Calu3 (cell line): ENCODE measurements at regions of chr11 and their contacts with region 1.

Region 1: DNA sequence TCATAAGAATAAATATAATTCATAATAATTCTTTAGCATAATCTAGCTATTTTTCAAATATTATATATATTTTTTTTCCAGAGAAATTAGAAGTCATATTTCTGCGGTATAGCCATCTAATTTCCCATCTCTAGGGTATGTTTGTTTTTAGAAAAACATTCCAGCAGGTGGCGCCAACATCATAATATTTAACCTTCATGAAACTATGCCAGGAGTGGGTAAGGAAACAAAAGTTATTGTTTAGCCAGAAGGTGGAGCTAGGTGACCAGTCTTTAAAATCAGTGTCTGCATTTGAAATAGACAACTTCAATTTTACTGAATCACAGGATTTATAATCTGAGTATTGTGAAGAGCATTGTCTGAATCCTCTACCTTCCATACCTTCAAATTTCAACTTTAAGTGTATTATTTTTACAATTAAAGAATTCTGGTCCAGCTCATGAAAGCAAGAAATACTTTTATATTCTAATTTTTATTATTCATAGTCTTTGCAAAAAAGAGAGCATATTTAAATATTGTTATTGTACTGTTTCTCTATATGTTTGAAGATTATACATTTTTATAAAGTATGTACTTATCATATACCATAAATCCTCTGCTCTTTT is 15.7 kb upstream of the CCDC179 start:
- DNase-seq: peak; percentile 72
- H3K4me3 Mint-ChIP-seq: no peak overlapping the region
- H3K27ac Mint-ChIP-seq: no peak overlapping the region
- H3K4me1 Mint-ChIP-seq: no peaks in the 10 kb centered on the region
- H3K27me3 Mint-ChIP-seq: no peaks in the 10 kb centered on the region
- CTCF ChIP-seq: peak; percentile 74

Region 2: DNA sequence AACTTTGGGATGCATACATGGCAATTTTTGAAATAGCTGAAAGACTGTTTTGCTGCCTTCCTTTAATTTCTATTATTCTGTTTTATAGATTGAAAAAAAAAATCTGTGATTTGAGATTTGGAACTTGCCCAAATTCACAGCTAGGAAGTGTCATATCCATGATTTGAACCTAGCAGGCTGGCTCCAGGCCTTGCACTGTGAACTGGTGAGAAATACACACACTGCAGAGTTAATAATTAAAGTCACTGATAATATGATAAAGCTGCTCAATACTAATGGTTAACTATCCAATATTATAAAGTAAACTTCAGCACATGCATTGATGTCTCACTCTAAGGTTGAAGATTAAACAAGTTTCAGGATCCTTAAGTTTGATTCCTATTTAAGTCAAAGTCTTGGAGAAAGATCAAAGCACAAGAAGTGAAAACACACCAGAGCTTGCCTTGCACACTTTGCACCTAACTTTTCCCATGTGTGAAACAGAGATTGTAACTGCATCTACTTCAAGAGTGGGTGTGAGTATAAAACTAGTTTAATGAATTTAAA is 134.9 kb after region 1 on chr11:
- CTCF ChIA-PET with region 1: interaction called, 4 read pairs
- intact Hi-C with region 1: loop called (anchors 5 kb)
- DNase-seq: peak; percentile 12
- H3K4me3 Mint-ChIP-seq: no peak overlapping the region
- H3K27ac Mint-ChIP-seq: no peak overlapping the region
- H3K4me1 Mint-ChIP-seq: peaks cover 20% of the 10 kb centered on the region
- H3K27me3 Mint-ChIP-seq: no peaks in the 10 kb centered on the region
- CTCF ChIP-seq: no peak

Region 3: DNA sequence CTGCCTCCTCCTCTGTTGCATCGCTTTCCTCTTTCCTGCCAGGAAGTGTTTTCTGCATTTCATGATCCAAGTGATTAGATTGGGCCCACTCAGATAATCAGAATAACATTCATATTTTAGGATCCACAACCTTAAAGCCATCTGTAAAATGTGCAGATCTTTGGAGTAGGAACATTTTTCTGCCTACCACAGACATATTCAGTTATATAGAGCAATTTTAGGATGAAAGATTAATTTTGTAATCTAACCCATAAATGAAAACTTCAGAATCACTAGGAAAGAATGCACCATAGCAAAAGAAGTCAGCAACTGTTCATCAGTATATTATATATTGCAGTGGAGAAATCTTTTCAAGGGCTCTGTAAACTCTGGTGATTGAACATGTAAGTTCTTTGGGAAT is 961.0 kb after region 1 on chr11:
- CTCF ChIA-PET with region 1: no interaction called
- intact Hi-C with region 1: loop called (anchors 10 kb)
- DNase-seq: no peak
- H3K4me3 Mint-ChIP-seq: no peak overlapping the region
- H3K27ac Mint-ChIP-seq: no peak overlapping the region
- H3K4me1 Mint-ChIP-seq: no peaks in the 10 kb centered on the region
- H3K27me3 Mint-ChIP-seq: no peaks in the 10 kb centered on the region
- CTCF ChIP-seq: no peak

Region 4: DNA sequence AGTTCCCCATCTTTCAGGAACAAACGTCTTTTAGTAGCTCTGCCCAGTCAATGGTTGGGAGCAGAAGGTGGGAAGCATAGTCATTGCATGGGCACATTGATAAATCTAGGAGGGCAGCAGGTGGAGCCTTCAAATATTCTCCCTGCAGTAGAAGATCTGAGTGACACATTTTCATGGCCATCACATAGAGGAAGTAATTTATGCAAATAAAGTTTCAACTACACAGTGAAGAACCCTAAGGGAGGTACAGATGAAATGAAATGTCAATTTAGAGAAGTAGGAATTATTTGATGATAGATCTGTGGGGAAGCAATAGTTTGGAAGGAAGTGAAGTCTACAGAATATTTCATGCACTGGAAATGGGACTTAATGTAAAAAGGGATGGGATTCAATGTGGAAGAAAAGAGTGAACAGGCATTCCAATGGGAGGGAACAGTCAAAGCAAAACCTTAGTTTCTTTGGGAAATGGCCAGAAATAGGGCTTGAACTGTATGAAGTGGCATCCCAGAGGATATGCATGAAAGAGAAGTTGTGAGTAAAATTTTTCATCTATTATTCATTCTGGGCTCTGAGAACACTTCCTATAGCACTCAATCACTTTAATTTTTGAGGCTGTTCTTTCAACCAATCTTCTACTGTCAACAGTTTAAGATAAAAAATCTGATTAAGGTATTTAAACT is 1364.7 kb after region 1 on chr11:
- CTCF ChIA-PET with region 1: no interaction called
- intact Hi-C with region 1: loop called (anchors 10 kb)
- DNase-seq: no peak
- H3K4me3 Mint-ChIP-seq: no peak overlapping the region
- H3K27ac Mint-ChIP-seq: no peak overlapping the region
- H3K4me1 Mint-ChIP-seq: peaks cover under 1% of the 10 kb centered on the region
- H3K27me3 Mint-ChIP-seq: no peaks in the 10 kb centered on the region
- CTCF ChIP-seq: no peak